AG04449 (cell line): ENCODE measurements at regions of chr3 and their contacts with region 1.

Region 1: DNA sequence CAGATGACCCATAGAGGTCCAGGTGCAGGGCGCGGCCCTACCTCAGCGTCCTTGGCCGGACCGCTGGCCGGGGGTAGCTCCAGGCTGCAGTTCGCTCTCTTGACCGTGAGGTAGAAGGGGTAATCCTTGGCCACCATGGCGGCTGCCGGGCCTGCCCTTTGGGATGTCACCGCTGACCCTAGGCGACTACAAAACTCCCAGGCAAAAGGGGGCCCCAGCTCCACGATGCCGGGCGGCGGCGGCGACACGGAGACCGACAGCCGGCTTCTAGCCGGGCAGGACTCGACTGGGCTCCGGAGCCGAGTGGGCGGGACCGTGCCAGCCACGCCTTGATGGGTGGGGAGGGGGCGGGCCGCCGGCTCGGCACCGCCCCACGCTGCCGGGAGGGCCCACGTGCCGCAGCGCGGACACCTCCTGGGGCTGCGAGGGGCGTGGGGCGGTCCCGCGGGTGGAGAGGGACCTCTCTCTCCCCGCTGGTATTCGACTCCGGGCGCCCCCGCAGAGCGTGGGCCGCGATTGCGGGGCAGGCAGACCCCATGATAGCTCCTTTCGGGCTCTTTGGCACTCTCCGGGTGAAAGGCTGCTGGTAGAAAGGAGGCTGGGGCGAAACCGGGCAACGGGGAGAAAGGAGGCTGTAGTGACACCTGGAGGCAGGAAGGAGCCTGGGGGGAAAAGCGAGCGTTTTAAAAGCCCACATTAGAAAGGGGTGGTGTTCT is at the start of gene ARHGEF3:
- DNase-seq: no peak
- H3K4me3 ChIP-seq: peak within 1 kb of the TSS; percentile 68
- CTCF ChIP-seq: peak; percentile 25

Region 2: DNA sequence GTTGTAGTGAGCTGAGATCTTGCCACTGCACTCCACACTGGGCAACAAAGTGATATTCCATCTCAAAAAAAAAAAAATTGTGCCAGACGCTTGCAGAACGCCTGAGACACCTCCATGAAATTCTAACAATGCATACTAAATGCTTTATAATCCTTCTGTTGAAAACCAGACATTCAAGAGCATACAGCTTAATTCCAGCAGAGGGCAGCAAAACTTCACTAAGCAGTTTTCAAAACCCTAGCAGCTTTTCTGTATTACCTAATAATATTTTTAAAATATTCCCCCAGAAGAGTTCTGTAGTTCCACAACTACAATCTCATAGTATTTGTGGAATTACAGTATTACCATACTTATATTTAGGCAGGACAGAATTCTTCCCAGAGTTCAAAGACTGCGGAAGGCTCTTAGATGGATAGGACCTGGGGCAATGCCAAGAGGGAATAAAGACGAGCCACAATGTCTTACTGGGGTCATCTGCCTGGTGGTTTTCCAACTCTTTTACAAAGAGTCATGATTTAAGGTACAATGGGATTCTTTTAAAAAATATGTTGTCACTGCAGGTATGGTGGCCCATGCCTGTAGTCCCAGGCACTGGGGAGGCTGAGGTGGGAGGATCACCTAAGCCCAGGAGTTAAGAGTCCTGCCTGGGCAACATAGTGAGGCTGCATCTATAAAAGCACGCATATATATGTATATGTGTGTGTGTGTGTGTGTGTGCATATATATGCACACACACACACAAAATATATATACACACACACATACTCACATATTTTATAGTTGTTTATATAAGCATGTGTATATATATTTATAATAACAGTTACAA is 99.1 kb before region 1 on chr3:
- CTCF ChIA-PET with region 1: interaction called, 164 read pairs
- POLR2A ChIA-PET with region 1: no interaction called
- DNase-seq: peak; percentile 41
- H3K4me3 ChIP-seq: no peak overlapping the region
- CTCF ChIP-seq: peak; percentile 58

Region 3: GRCh38 chr3:56775838-56776555 is 25.8 kb before region 1 on chr3:
- CTCF ChIA-PET with region 1: interaction called, 87 read pairs
- POLR2A ChIA-PET with region 1: no interaction called
- DNase-seq: no peak
- H3K4me3 ChIP-seq: no peak overlapping the region
- CTCF ChIP-seq: no peak

Region 4: GRCh38 chr3:56812754-56813650 is 11.2 kb after region 1 on chr3:
- CTCF ChIA-PET with region 1: interaction called, 44 read pairs
- POLR2A ChIA-PET with region 1: no interaction called
- DNase-seq: no peak
- H3K4me3 ChIP-seq: no peak overlapping the region
- CTCF ChIP-seq: no peak

Region 5: DNA sequence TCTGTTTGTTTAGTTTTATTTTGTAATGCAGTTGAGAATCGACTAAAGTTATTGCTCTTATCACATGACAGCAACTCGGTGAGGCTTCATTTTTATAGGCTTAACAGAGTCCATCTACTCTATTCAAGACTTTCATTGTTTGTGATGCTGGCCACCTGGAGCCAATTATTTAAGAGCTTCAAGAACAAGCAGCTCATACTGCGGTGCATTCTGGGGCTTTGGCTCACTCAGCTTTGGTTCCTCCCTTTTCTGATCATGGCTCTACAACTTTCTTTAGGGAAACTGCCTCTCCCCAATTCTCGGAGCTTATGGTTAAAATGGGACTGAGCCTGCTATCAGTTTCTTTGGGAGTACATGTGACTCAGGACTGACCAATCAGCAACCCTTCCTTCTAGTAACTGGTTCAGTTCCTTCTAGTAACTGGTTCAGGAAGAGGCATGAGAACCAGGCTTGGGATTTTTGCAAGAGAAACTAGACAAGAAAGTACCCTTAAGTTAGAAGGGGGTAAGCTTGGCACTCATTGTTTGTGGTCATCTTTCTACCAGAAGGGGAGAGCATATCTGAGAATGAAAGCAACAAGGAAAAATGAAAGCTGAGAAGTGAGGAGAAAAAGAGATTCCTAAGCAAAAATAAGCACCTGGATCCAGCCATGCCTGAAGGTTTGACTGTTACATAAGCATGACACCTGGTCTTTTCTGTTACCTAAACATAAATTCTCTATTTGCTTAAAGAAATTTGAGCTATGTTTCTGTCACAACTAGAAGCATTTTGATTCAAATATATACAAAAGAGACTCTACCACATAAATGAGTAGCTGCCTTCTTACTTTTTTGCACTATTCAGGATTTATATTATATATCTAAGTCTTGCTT is 24.0 kb after region 1 on chr3:
- CTCF ChIA-PET with region 1: interaction called, 23 read pairs
- POLR2A ChIA-PET with region 1: interaction called, 3 read pairs
- DNase-seq: no peak
- H3K4me3 ChIP-seq: no peak overlapping the region
- CTCF ChIP-seq: no peak

Region 6: GRCh38 chr3:56988458-56989168 is 186.8 kb after region 1 on chr3:
- CTCF ChIA-PET with region 1: interaction called, 131 read pairs
- POLR2A ChIA-PET with region 1: no interaction called
- DNase-seq: no peak
- H3K4me3 ChIP-seq: no peak overlapping the region
- CTCF ChIP-seq: peak; percentile 65